ENCODE measurements at regions of chr3 and their contacts with region 1.

Region 1: GRCh38 chr3:150925751-150926201 is 20.5 kb upstream of the MINDY4B start:
- DNase-seq: peak; percentile 54
- ATAC-seq: peak; percentile 66
- H3K4me3 ChIP-seq: peak overlapping the region in 3 of 5 experiments; percentile 31 to 43 (median 38)
- H3K4me3 Mint-ChIP-seq: peak overlapping the region; percentile 75
- H3K27ac ChIP-seq: no peak overlapping the region
- H3K27ac Mint-ChIP-seq: no peak overlapping the region
- H3K4me1 ChIP-seq: peaks cover 12 to 14% of the 10 kb centered on the region in 2 donors
- H3K4me1 Mint-ChIP-seq: peaks cover 12% of the 10 kb centered on the region
- H3K27me3 ChIP-seq: peaks cover 0 to 3% (median 0%) of the 10 kb centered on the region in 4 experiments
- H3K27me3 Mint-ChIP-seq: peaks cover 19% of the 10 kb centered on the region
- CTCF ChIP-seq: peak; percentile 77

Region 2: DNA sequence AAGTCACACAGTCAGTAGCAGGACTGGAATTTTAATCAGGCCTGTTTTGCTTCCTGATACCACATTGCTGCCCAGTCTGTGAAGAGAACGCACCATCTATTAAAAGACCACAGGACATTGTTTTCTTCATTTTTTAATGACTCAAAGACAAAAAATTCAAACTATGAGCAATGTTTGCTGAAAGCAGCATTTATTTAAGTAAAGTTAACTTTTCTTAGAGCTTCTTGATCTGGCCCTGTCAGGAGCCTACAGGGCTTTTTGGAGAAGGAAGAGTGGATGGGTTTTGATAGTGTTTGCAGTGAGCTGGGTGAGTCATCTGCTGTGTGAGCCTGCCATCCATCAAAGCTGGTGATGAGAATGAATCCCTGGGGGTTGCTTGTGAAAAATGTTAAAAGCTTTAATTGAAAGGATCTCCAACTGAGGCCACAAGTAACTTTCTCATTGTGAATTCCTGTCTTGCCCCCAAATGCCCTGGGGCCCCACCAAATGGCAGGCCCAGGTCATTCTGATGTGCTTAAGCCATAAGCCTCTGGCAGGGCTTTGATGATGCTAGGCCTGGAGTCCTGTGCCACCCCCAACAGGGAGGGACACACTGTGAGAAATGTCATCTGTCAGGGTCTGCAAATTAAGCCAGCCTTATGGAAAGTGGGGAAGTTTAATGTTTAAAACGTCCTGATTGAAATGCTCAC is 818.9 kb before region 1 on chr3:
- CTCF ChIA-PET with region 1: no interaction called
- POLR2A ChIA-PET with region 1: no interaction called
- intact Hi-C with region 1: no loop called
- DNase-seq: no peak
- ATAC-seq: no peak
- H3K4me3 ChIP-seq: no peak overlapping the region
- H3K4me3 Mint-ChIP-seq: no peak overlapping the region
- H3K27ac ChIP-seq: no peak overlapping the region
- H3K27ac Mint-ChIP-seq: no peak overlapping the region
- H3K4me1 ChIP-seq: no peaks in the 10 kb centered on the region
- H3K4me1 Mint-ChIP-seq: no peaks in the 10 kb centered on the region
- H3K27me3 ChIP-seq: no peaks in the 10 kb centered on the region
- H3K27me3 Mint-ChIP-seq: peaks cover 5% of the 10 kb centered on the region
- CTCF ChIP-seq: no peak

Region 3: DNA sequence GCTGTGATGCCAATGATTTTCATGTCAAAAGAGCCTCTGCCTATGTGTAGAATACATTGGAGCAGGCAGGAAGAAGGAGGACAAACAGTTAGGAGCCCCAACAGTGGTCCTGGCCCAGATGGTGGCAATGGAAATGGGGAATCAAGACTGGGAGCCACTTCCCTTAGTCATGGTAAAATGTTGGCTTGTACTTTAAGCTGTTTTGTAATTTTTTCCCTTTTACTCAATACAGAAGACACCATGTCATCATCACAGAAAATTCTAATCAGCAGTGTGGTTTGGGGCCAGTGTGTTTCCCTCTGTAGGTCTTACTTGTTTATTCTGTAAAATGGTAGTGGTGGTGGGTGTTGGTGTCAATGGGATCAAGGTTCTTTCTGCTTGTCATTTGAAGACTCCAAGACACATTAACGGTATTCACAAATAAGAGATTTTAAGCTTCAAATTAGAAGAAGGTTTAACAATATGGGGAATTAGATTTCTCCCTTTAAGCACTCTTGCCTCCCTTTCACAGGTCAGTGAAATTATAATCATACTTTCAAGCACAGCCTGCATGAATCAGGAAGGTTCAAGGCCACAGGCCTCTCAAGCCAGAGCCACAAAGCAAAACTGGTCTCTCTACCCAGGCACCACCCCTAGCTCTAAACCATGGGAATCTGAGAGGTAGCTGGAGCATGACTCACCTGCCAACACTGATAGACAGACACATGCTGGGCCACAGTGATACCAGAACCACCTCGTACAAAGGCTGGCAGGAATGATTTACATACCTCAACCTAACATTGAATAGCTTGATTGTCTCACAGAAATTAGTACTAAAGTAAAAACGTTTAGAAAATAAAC is 187.7 kb before region 1 on chr3:
- CTCF ChIA-PET with region 1: no interaction called
- POLR2A ChIA-PET with region 1: no interaction called
- intact Hi-C with region 1: no loop called
- DNase-seq: no peak
- ATAC-seq: no peak
- H3K4me3 ChIP-seq: no peak overlapping the region
- H3K4me3 Mint-ChIP-seq: peak overlapping the region; percentile 20
- H3K27ac ChIP-seq: no peak overlapping the region
- H3K27ac Mint-ChIP-seq: peak overlapping the region; percentile 21
- H3K4me1 ChIP-seq: peaks cover 43 to 46% of the 10 kb centered on the region in 2 donors
- H3K4me1 Mint-ChIP-seq: peaks cover 60% of the 10 kb centered on the region
- H3K27me3 ChIP-seq: no peaks in the 10 kb centered on the region
- H3K27me3 Mint-ChIP-seq: no peaks in the 10 kb centered on the region
- CTCF ChIP-seq: no peak

Region 4: GRCh38 chr3:150890298-150891230 is 35.2 kb before region 1 on chr3:
- CTCF ChIA-PET with region 1: no interaction called
- POLR2A ChIA-PET with region 1: no interaction called
- intact Hi-C with region 1: no loop called
- DNase-seq: no peak
- ATAC-seq: no peak
- H3K4me3 ChIP-seq: peak overlapping the region in 1 of 5 experiments; percentile 21
- H3K4me3 Mint-ChIP-seq: no peak overlapping the region
- H3K27ac ChIP-seq: no peak overlapping the region
- H3K27ac Mint-ChIP-seq: no peak overlapping the region
- H3K4me1 ChIP-seq: no peaks in the 10 kb centered on the region
- H3K4me1 Mint-ChIP-seq: no peaks in the 10 kb centered on the region
- H3K27me3 ChIP-seq: peaks cover 0 to 6% (median 0%) of the 10 kb centered on the region in 4 experiments
- H3K27me3 Mint-ChIP-seq: peaks cover 24% of the 10 kb centered on the region
- CTCF ChIP-seq: no peak

Region 5: DNA sequence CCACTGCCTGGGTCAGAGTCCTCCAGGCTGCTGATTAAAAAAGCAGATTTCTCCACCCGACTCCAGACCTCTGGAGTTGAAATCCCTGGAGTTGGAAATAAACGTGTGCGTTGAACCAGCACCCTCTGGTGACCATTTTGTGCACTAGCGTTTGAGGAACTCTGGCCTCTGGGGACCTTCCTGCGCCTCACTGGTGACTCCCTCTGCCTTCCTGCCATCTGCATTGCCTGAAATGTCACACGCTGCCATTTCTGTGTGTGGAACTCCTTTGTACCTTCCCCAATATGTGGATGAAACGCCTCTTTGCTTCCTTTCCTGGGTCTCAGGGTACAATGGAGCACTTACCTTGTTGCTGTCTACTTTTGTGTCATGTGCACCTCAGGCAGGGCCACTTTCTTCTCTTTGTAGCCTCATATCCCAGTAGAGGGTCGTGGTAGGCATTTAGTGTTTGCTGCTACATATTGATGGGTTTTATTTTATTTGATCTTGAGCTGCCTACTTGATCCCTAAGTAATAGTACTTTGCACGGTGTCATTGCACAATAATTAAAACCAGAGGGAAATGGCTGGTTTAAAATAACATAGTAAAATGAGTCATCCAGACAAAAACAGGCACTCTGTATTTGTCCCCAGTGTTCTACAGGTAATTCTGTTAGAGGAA is 220.4 kb after region 1 on chr3:
- CTCF ChIA-PET with region 1: interaction called, 3 read pairs
- POLR2A ChIA-PET with region 1: no interaction called
- intact Hi-C with region 1: loop called (anchors 1 kb)
- DNase-seq: peak; percentile 80
- ATAC-seq: peak; percentile 99
- H3K4me3 ChIP-seq: peak overlapping the region in 3 of 5 experiments; percentile 7 to 48 (median 29)
- H3K4me3 Mint-ChIP-seq: no peak overlapping the region
- H3K27ac ChIP-seq: no peak overlapping the region
- H3K27ac Mint-ChIP-seq: no peak overlapping the region
- H3K4me1 ChIP-seq: peaks cover 9 to 17% of the 10 kb centered on the region in 2 donors
- H3K4me1 Mint-ChIP-seq: peaks cover 4% of the 10 kb centered on the region
- H3K27me3 ChIP-seq: peaks cover 0 to 4% (median 0%) of the 10 kb centered on the region in 4 experiments
- H3K27me3 Mint-ChIP-seq: peaks cover 3% of the 10 kb centered on the region
- CTCF ChIP-seq: peak; percentile 86